Right ventricle myocardium inferior (tissue), 1 donor: ENCODE measurements at regions of chr3 and their contacts with region 1.

Region 1: GRCh38 chr3:5057857-5058324 is 64.2 kb upstream of the ARL8B start:
- DNase-seq: no peak
- ATAC-seq: peak; percentile 93

Region 2: GRCh38 chr3:4656059-4656458 is 401.8 kb before region 1 on chr3:
- intact Hi-C with region 1: loop called (anchors 2 kb)
- DNase-seq: peak; percentile 74
- ATAC-seq: peak; percentile 79

Region 3: DNA sequence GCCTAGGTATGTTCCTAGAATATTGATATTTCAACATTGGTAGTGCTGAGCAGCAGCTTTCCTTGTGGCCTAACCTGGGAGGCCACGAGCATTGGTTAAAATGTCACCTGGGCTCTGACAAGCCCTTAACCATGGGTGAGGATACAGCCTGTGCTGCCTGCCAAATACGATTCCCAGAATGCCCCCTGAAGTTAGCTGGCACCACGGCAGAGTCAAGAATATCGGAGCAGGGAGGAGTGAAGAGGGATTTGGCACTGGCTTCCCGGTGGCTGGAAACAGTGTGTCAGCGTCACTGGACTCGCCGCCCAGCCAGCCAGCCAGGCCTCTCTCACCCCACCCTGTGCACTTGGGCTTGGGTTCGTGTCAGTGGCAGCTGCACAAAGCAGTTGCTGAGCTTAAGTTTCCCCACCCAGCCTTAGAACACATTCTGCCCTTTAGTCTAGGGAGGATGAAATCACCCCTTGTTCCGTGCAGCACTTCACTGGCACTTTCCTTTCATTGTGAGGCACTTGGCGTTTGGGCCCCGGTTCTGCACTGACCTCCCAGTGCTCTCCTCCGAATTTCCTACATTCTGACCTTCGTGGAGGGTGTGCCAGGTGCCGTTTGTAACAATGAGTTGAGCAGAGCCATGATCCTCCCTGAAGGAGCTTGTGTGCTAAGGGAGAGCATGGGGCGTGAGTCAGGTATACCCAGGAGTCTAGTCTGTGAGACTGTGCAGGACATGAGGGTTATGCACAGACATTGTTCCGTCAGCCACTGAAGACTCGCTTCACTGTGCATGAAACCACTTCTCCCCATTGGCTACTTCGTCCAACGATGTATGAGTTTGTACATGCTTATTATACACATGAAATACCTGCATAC is 231.4 kb before region 1 on chr3:
- intact Hi-C with region 1: no loop called
- DNase-seq: peak; percentile 84
- ATAC-seq: peak; percentile 89